ENCODE measurements at regions of chr1 and their contacts with region 1.

Region 1: DNA sequence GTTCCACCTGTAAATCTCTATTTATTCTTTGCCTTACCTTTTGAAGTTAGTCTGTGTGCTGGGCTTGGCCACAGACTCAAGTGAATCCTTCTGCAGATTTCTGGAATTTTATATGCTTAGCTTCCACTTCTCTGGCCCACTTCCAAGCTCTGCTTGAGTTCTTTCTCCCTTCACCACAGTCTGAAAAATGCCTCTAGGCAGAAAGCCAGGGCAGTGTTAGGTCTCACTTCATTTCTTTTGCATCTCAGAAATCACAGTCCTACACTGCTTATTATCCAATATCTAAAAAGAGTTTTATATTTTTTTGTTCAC is 48.9 kb downstream of the INKA2 start:
- DNase-seq: no peak
- ATAC-seq: no peak
- H3K4me3 Mint-ChIP-seq: no peak overlapping the region
- H3K27ac Mint-ChIP-seq: peak overlapping the region; percentile 80
- H3K4me1 Mint-ChIP-seq: peaks cover 59% of the 10 kb centered on the region
- H3K27me3 Mint-ChIP-seq: no peaks in the 10 kb centered on the region
- CTCF ChIP-seq: no peak

Region 2: DNA sequence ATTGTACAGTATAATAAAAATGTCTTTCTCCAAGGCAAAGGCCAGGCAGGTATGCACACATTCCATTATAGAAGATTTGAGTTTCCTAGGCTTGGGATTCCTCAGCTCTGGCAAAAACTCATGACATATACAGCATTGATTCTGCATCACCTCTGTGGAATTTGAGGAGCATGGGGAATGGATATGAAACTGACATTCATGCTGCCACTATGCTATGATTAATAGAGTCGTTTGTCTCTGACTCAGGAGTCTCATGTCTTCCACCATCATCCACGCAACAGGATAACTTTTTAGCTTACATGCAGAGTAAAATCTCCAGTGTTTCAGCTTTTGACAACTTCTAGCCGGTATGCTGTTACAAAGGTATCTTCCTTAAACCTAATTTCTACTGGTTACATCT is 137.1 kb before region 1 on chr1:
- CTCF ChIA-PET with region 1: no interaction called
- POLR2A ChIA-PET with region 1: no interaction called
- intact Hi-C with region 1: no loop called
- DNase-seq: no peak
- ATAC-seq: no peak
- H3K4me3 Mint-ChIP-seq: no peak overlapping the region
- H3K27ac Mint-ChIP-seq: no peak overlapping the region
- H3K4me1 Mint-ChIP-seq: no peaks in the 10 kb centered on the region
- H3K27me3 Mint-ChIP-seq: no peaks in the 10 kb centered on the region
- CTCF ChIP-seq: no peak

Region 3: GRCh38 chr1:111615870-111616715 is 74.2 kb before region 1 on chr1:
- CTCF ChIA-PET with region 1: no interaction called
- POLR2A ChIA-PET with region 1: no interaction called
- intact Hi-C with region 1: no loop called
- DNase-seq: no peak
- ATAC-seq: peak; percentile 51
- H3K4me3 Mint-ChIP-seq: peak overlapping the region; percentile 70
- H3K27ac Mint-ChIP-seq: peak overlapping the region; percentile 95
- H3K4me1 Mint-ChIP-seq: peaks cover 53% of the 10 kb centered on the region
- H3K27me3 Mint-ChIP-seq: no peaks in the 10 kb centered on the region
- CTCF ChIP-seq: no peak

Region 4: DNA sequence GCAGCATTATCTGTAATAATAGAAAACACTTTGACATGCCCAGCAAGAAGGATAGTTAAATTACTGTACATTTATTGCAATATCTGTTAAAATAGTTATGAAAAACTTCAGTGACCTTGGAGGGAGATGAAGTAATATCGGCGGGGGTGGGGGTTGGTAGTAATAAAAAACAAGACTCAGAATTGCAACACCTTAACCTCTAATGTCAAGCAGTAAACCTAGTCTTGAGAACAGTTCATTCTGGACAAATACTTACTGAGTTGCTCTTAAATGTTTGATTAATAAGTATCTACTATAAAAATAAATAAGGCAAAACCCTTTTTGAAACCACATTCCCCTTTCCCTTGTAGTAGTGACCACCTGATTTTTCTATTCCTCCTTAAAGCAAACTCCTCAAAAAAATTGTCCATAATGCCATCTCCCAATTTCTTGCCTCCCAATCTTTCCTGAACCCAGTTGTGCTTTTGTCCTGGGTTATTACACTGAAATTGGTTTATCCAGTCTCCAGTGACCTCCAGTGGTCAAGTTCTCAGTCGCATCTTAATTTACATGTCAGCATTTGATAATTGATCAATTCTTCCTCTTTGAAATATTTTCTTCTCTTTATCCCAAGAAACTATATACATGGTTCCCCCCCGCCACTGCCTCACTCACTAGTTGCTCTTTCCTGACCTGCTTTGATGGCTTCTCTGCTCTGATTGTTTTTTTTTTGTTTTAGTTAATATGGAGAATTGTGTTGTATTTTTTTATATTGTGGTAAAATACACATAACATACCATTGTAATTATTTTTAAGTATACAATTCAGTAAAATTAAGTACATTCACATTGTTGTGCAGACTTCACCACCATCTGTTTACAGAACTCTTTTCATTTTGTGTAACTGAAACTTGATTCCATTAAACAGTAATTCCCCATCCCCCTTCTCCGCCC is 33.9 kb before region 1 on chr1:
- CTCF ChIA-PET with region 1: no interaction called
- POLR2A ChIA-PET with region 1: no interaction called
- intact Hi-C with region 1: loop called (anchors 5 kb)
- DNase-seq: no peak
- ATAC-seq: no peak
- H3K4me3 Mint-ChIP-seq: no peak overlapping the region
- H3K27ac Mint-ChIP-seq: no peak overlapping the region
- H3K4me1 Mint-ChIP-seq: peaks cover 35% of the 10 kb centered on the region
- H3K27me3 Mint-ChIP-seq: no peaks in the 10 kb centered on the region
- CTCF ChIP-seq: peak; percentile 52

Region 5: GRCh38 chr1:111707906-111708305 is 17.6 kb after region 1 on chr1:
- CTCF ChIA-PET with region 1: interaction called, 3 read pairs
- POLR2A ChIA-PET with region 1: no interaction called
- intact Hi-C with region 1: loop called (anchors 2 kb)
- DNase-seq: no peak
- ATAC-seq: no peak
- H3K4me3 Mint-ChIP-seq: no peak overlapping the region
- H3K27ac Mint-ChIP-seq: no peak overlapping the region
- H3K4me1 Mint-ChIP-seq: no peaks in the 10 kb centered on the region
- H3K27me3 Mint-ChIP-seq: no peaks in the 10 kb centered on the region
- CTCF ChIP-seq: no peak

Region 6: DNA sequence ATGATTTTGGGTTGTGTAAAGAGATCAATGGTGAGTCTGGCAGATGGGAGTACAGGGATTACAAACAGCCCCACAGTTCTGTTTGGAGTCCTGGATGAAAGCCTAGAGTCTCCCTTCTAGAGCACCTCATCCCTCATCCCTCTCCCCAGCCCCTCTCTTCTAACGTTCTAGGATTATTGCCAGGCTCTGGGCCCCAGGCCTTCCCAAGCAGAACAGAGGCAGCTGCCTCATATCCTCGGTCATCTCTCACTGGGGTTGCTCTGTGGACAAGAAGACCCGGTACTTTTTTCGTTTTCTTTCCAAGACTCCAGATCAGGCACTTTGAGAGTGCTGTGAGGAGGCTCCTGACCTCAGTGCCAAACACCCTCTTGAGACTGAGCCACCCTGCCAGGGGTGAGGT is 316.2 kb after region 1 on chr1:
- CTCF ChIA-PET with region 1: no interaction called
- POLR2A ChIA-PET with region 1: no interaction called
- intact Hi-C with region 1: no loop called
- DNase-seq: no peak
- ATAC-seq: no peak
- H3K4me3 Mint-ChIP-seq: no peak overlapping the region
- H3K27ac Mint-ChIP-seq: no peak overlapping the region
- H3K4me1 Mint-ChIP-seq: no peaks in the 10 kb centered on the region
- H3K27me3 Mint-ChIP-seq: peaks cover 2% of the 10 kb centered on the region
- CTCF ChIP-seq: no peak

Measured in activated B cell treated with CpG ODN at 0.5 μM for 24 hours (primary cell).